Gastrocnemius medialis (tissue), 4 donors: ENCODE measurements at regions of chr22 and their contacts with region 1.

Region 1: GRCh38 chr22:33000342-33001280 is 57.6 kb downstream of the SYN3 start:
- DNase-seq: peak in 1 of 2 donors; percentile 25
- ATAC-seq: no peak
- H3K4me3 ChIP-seq: no peak overlapping the region
- H3K27ac ChIP-seq: no peak overlapping the region
- H3K4me1 ChIP-seq: peaks cover 6 to 11% of the 10 kb centered on the region in 2 donors
- H3K27me3 ChIP-seq: no peaks in the 10 kb centered on the region
- CTCF ChIP-seq: peak; percentile 58 to 85 (median 78)
- POLR2A ChIP-seq: no peak

Region 2: DNA sequence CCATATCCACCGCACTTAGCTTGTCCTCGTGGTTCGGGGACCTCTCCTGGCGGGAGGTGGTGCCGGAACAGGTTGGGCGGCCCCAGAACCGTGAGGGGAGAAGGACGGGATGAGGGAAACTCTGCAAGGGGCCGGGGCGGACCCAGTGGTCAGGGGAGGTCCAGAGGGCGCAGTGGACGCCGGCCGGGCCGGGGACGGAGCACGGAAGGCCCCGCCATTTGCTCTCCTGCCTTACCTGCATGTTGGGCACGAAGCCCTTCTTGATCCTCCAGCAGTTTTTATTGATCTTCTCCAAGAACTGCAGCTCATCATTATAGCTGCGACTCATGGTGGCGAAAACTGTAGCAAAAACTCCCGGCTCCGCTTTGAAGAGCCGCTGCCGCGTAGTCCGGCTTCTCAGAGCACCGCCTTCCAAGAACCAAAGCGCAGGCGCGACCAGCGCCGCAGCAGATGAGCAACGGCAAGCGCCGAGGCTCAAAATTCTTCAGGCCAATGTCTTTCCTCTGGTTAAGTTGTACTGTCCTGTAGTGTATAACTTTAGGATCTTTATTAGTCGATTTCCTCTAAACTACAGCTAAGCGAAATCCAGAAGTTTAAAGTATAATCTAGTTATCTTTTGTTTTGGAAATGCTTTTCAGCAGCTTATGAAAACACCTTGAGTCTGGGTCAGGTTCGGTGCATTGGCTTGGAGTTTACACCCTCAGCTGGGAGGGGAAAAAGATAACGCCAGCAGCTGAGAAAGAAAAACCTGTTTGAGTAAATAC is 588.6 kb before region 1 on chr22 and contains the start of gene RTCB:
- in situ Hi-C with region 1: no loop called
- intact Hi-C with region 1: loop called (anchors 5 kb)
- DNase-seq: peak; percentile 74 to 85
- ATAC-seq: peak; percentile 90 to 92
- H3K4me3 ChIP-seq: peak within 1 kb of the TSS; percentile 91 to 96 (median 92)
- H3K27ac ChIP-seq: peak within 1 kb of the TSS; percentile 77 to 85 (median 80)
- H3K4me1 ChIP-seq: peaks cover 11 to 27% of the 10 kb centered on the region in 2 donors
- H3K27me3 ChIP-seq: no peaks in the 10 kb centered on the region
- CTCF ChIP-seq: peak in 1 of 5 experiments; percentile 7
- POLR2A ChIP-seq: peak; percentile 64 to 76
- total RNA-seq, gene RTCB: 53.7 to 76.4 (median 56.6) TPM

Region 3: DNA sequence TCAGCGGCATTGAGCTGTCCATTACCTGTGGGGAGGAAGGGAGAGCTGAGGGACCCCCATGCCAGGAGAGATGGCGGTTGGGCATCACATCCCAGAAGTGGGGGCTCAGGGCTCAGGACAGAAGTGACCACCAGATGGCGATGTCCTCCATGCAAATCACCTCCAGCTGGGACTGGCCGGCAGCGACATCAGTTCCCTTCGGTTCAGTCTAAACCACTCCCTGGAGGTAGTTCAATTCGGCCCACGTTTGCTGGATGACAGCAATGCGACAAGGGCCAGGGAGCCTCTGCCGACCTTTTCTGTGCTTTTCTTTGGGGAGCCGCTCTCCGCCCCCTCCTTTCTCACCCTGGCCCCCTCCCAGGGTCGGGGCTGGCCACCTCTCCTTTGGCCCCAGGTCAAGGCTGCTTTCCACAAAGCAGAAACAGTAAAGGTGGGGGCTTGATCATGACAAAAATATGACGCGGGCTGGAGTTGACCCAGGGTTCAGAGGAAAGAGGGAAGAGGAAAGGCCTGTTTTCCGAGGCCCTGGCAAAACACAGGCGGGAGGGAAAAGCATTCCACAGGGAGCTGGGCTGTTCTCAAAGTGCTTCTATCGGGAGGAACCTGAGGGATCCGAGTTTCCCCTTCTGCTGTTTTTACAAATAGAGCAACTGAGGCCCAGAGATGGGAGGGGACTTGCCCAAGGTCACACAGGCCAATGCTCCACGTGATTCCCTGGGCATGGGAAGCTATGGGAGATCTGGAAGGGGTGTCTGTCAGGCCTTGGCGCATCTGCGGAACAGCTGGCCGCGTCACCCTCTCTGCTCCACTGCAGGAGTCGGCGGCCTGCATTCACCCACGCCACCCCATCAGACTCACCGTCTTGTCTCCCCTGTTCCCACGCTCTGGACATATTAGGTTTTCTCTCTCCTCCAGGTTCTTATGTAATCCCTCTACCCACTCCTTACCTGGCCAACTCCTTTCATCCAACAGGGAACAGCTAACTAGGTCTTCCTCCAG is 471.3 kb before region 1 on chr22:
- in situ Hi-C with region 1: loop called in 2 of 4 experiments (anchors 5 kb)
- intact Hi-C with region 1: loop called (anchors 1 kb)
- DNase-seq: peak; percentile 68 to 77
- ATAC-seq: peak; percentile 60 to 62
- H3K4me3 ChIP-seq: peak overlapping the region in 1 of 4 donors; percentile 35
- H3K27ac ChIP-seq: peak overlapping the region; percentile 71 to 87 (median 78)
- H3K4me1 ChIP-seq: peaks cover 17 to 33% of the 10 kb centered on the region in 2 donors
- H3K27me3 ChIP-seq: no peaks in the 10 kb centered on the region
- CTCF ChIP-seq: peak; percentile 59 to 89 (median 85)
- POLR2A ChIP-seq: no peak

Region 4: DNA sequence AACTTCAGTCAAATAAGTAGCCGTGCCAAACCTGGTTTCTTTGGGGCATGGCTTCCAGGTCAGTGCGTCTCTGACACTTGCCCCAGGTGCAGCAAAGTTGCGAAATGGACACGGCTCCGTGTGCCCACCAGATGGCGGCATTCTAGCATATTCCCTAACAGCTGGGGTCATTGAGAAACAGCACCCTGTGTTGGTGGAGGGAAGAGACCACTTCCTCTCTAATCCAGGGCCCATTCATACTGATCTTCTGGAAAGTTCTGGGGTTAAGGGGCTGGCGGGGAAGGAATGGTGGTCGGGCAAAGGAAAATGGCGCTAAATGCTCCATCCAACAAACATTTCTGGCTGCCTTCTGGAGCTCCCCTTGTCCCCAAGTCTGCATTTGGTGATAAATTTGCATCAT is 340.3 kb before region 1 on chr22:
- in situ Hi-C with region 1: loop called in 3 of 4 experiments (anchors 25 kb)
- intact Hi-C with region 1: loop called (anchors 2 kb)
- DNase-seq: peak; percentile 13 to 52
- ATAC-seq: peak in 1 of 2 donors; percentile 58
- H3K4me3 ChIP-seq: no peak overlapping the region
- H3K27ac ChIP-seq: no peak overlapping the region
- H3K4me1 ChIP-seq: no peaks in the 10 kb centered on the region
- H3K27me3 ChIP-seq: peaks cover 0 to 2% (median 0%) of the 10 kb centered on the region in 3 donors
- CTCF ChIP-seq: peak; percentile 42 to 60 (median 58)
- POLR2A ChIP-seq: no peak

Region 5: DNA sequence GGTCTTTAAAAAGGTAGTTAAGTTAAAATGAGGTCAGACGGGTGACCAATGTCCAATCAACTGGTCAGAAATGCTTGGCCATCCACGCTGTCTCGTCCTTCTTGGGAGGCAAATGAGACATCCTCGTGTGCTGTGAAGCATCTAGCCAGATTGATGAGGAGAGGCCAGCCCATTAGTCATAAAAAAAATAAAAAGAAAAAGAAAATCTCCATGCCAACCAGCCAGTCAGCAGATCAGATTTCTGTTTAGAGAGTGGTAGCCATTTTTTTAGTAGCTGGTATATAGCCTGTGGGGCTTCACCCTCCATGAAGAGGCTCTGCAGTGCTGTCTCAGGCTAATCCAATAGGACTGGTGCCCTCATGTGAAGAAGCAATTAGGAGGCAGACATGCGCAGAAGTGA is 400.7 kb after region 1 on chr22:
- in situ Hi-C with region 1: no loop called
- intact Hi-C with region 1: no loop called
- DNase-seq: no peak
- ATAC-seq: no peak
- H3K4me3 ChIP-seq: no peak overlapping the region
- H3K27ac ChIP-seq: no peak overlapping the region
- H3K4me1 ChIP-seq: peaks cover 9% of the 10 kb centered on the region in 2 donors
- H3K27me3 ChIP-seq: no peaks in the 10 kb centered on the region
- CTCF ChIP-seq: no peak
- POLR2A ChIP-seq: no peak